Breast epithelium (tissue), 4 donors: ENCODE measurements at regions of chr2 and their contacts with region 1.

Region 1: DNA sequence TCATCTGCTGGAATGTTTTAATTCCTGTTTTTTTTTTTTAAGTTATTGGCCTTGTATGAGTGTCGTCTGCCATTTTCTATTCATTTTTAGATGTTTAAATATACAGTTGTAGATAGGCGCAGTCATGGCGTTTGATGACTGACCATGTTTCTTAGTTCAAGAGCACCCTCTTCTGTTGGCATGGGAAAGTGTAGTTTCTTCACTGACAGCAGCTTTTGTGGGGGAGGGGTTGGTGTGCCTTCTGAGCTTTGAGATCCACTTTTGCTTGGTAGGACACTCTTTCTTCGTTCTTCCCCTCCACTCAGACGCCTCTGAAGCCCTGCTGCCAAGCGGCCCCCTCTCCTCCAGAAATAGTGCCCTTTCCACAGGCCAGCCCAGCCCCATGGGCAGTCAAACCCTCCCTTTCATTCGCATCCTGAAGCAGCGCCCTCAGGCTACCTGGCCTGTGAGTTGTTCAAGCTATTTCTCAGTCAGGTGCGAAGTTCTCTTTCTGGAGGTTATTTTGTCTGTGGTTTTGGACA is 492.0 kb downstream of the TNS1 start:
- DNase-seq: peak; percentile 56 to 62
- H3K4me3 ChIP-seq: no peak overlapping the region
- H3K27ac ChIP-seq: peak overlapping the region in 1 of 2 donors; percentile 17
- H3K4me1 ChIP-seq: no peaks in the 10 kb centered on the region
- H3K27me3 ChIP-seq: no peaks in the 10 kb centered on the region
- CTCF ChIP-seq: peak; percentile 50 to 90 (median 89)
- POLR2A ChIP-seq: no peak

Region 2: DNA sequence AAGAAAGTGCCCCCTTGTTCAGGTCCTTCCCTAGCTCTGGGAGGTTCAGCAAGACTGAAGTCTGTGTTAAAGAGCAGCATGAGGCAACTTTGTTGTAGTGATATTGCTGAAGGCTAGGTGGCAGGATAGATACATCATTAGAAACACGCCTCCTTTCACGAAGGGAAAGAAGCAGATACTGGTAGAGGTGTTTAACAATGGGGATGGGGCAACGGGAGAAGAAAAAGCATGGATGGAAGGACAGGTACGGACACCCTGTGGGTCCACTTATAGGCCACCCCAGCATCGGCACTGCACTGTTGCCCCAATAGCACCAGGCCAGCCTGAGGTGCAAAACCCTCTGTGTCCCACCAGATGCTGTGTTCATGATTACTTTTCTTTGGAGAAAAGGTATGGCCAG is 811.9 kb before region 1 on chr2:
- intact Hi-C with region 1: loop called (anchors 10 kb)
- DNase-seq: no peak
- H3K4me3 ChIP-seq: no peak overlapping the region
- H3K27ac ChIP-seq: peak overlapping the region in 1 of 2 donors; percentile 5
- H3K4me1 ChIP-seq: peaks cover 0 to 12% of the 10 kb centered on the region in 2 donors
- H3K27me3 ChIP-seq: no peaks in the 10 kb centered on the region
- CTCF ChIP-seq: peak; percentile 27 to 74 (median 63)
- POLR2A ChIP-seq: no peak

Region 3: GRCh38 chr2:217816396-217816869 is 305.6 kb after region 1 on chr2:
- intact Hi-C with region 1: no loop called
- DNase-seq: no peak
- H3K4me3 ChIP-seq: no peak overlapping the region
- H3K27ac ChIP-seq: peak overlapping the region; percentile 52 to 57
- H3K4me1 ChIP-seq: no peaks in the 10 kb centered on the region
- H3K27me3 ChIP-seq: no peaks in the 10 kb centered on the region
- CTCF ChIP-seq: no peak
- POLR2A ChIP-seq: no peak